ENCODE measurements at regions of chr4 and their contacts with region 1.

Region 1: GRCh38 chr4:156475322-156475721 is 496.3 kb downstream of the PDGFC start:
- DNase-seq: no peak
- ATAC-seq: peak; percentile 66 to 88 (median 74)
- H3K4me3 ChIP-seq: no peak overlapping the region
- H3K27ac ChIP-seq: no peak overlapping the region
- H3K4me1 ChIP-seq: no peaks in the 10 kb centered on the region
- H3K27me3 ChIP-seq: no peaks in the 10 kb centered on the region
- CTCF ChIP-seq: peak; percentile 62

Region 2: DNA sequence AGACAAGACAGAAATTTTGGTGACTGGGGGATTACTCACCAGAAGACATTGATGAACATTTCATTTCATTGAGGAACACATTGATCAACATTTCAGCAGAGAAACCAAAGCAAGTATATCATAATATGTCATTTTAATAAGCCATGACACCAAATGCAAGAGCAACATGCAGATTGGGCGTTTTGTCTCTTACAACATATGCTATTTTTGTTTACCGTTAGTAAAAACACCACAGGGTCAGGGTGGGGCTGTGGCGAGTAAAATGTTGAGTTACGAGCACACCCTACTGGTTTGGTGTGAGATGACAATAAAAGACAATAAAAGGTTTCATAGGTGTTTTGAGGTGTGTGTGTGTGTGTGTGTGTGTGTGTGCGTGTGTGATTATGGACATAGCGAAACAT is 201.8 kb after region 1 on chr4:
- intact Hi-C with region 1: loop called in 1 of 2 experiments (anchors 5 kb)
- DNase-seq: no peak
- ATAC-seq: peak; percentile 61 to 74 (median 68)
- H3K4me3 ChIP-seq: no peak overlapping the region
- H3K27ac ChIP-seq: no peak overlapping the region
- H3K4me1 ChIP-seq: peaks cover 8% of the 10 kb centered on the region
- H3K27me3 ChIP-seq: no peaks in the 10 kb centered on the region
- CTCF ChIP-seq: no peak

Region 3: DNA sequence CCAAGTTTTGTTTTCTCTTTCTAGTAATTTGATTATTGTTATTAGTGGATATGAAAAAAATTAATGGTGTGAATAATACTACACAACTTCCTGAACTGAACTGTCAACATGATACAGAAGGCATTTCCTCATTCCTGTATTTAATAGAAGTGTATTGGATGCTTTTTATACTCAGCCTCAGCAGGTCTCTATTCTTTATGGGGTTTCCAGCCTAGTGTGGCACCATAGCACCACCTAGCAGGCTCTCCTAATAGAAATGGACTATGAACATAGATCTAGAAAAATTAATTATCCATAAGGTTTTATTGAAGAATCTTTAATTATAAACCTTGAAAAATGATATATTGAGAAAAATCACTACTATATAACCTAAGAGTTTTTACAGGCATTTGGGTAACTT is 653.1 kb after region 1 on chr4:
- intact Hi-C with region 1: loop called in 1 of 2 experiments (anchors 10 kb)
- DNase-seq: no peak
- ATAC-seq: no peak
- H3K4me3 ChIP-seq: no peak overlapping the region
- H3K27ac ChIP-seq: no peak overlapping the region
- H3K4me1 ChIP-seq: no peaks in the 10 kb centered on the region
- H3K27me3 ChIP-seq: no peaks in the 10 kb centered on the region
- CTCF ChIP-seq: peak; percentile 29